ENCODE measurements at regions of chr14 and their contacts with region 1.

Region 1: GRCh38 chr14:32939254-32940065 is 781 bp downstream of the NPAS3 start:
- DNase-seq: peak; percentile 95
- H3K4me3 ChIP-seq: peak overlapping the region; percentile 54 to 88 (median 71)
- H3K27ac ChIP-seq: peak overlapping the region; percentile 90 to 98 (median 94)
- H3K4me1 ChIP-seq: peaks cover 0 to 28% (median 22%) of the 10 kb centered on the region in 4 donors
- H3K27me3 ChIP-seq: peaks cover 0 to 9% (median 0%) of the 10 kb centered on the region in 3 donors
- CTCF ChIP-seq: no peak
- EP300 ChIP-seq: no peak
- POLR2A ChIP-seq: peak; percentile 19 to 36

Region 2: DNA sequence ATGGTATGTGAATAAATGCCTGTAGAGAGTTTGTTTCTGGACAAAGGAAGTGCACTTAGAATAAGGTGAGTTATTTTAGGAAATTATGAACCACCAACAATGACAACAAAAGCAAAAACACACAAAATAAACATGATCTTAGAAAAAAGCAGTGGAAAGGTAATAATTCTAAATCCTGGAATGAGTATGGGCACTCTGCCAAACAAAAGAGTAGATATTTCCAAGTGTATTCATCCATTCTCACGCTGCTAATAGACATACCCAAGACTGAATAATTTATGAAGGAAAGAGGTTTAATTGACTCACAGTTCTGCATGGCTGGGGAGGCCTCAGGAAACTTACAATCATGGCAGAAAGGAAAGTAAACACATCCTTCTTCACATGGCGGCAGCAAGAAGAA is 270.1 kb before region 1 on chr14:
- intact Hi-C with region 1: no loop called
- DNase-seq: no peak
- H3K4me3 ChIP-seq: no peak overlapping the region
- H3K27ac ChIP-seq: no peak overlapping the region
- H3K4me1 ChIP-seq: no peaks in the 10 kb centered on the region
- H3K27me3 ChIP-seq: no peaks in the 10 kb centered on the region
- CTCF ChIP-seq: no peak
- EP300 ChIP-seq: no peak
- POLR2A ChIP-seq: no peak

Region 3: DNA sequence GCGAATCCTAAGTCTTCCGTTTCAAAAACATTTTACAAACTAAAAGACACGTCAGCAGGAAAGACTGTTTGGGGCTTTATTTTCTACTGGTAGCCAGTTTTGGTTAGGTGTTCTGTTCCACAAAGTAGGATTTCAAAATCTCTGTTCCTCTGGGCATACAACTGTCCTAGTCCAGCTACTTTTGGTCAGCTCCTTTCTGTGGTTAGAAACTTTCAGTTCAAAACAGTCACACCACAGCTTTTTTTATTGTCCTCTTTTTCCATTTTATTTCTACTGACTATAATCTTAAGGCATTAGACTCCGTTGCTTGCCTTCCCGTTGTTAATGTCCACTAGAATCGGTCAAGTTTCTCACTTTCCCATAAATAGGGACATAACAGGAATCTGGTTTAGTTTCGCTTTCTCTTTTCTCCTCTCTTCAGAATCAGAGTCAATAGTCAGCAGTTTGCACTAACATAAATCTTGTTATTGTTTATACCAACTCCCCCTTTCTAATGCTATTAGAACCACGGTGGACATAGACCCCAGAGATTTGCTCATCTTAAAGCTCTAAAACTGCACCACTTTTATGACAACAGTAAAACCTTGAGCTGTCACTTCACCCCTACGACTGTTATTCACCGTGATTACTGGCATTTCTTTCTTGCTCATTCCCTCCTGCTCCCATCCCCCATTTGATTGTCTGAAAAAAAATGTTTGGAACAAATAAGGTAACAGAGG is 42.3 kb before region 1 on chr14:
- intact Hi-C with region 1: loop called (anchors 2 kb)
- DNase-seq: no peak
- H3K4me3 ChIP-seq: peak overlapping the region; percentile 29 to 55 (median 54)
- H3K27ac ChIP-seq: peak overlapping the region; percentile 68 to 85 (median 82)
- H3K4me1 ChIP-seq: peaks cover 0 to 6% (median 3%) of the 10 kb centered on the region in 4 donors
- H3K27me3 ChIP-seq: no peaks in the 10 kb centered on the region
- CTCF ChIP-seq: no peak
- EP300 ChIP-seq: no peak
- POLR2A ChIP-seq: no peak

Region 4: DNA sequence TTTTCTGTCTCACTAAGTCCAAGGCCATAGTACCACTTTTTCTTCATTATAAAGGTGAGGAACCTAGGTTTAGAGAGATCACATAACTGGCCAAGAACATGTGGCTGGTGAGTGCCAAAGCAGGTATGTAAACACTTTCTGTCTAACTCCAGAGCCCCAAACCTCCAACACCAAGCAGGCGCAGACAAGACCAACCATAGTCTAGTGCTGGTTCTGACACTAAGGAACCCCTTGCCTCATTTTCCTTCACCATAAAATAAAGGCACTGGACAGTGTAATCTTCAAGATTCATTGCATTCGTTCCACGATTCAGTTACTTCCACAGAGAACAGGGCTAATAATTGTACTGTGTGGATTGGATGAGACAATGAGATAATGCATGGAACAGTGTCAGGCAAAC is 70.2 kb after region 1 on chr14:
- intact Hi-C with region 1: loop called (anchors 10 kb)
- DNase-seq: no peak
- H3K4me3 ChIP-seq: no peak overlapping the region
- H3K27ac ChIP-seq: no peak overlapping the region
- H3K4me1 ChIP-seq: peaks cover 0 to 13% (median 9%) of the 10 kb centered on the region in 4 donors
- H3K27me3 ChIP-seq: no peaks in the 10 kb centered on the region
- CTCF ChIP-seq: no peak
- EP300 ChIP-seq: no peak
- POLR2A ChIP-seq: no peak

Region 5: DNA sequence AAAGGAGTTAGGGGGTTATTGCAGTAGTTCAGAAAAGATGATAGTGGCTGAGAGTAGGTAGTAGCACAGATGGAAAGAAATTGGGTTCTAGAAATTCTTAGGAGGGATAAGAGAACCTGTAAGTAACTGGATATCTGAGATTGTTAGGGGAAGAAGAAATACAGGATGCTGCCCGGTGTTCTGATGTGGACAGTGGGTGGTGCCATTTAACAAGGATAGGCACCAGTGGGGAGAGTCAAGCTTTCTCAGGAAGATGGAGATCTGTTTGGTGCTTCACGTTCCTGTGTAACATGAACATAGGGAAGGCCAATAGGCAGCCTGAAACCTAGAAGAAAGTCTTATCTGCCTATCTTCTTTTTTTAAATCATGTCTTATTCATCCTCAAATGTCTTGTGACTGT is 245.1 kb after region 1 on chr14:
- intact Hi-C with region 1: no loop called
- DNase-seq: no peak
- H3K4me3 ChIP-seq: no peak overlapping the region
- H3K27ac ChIP-seq: no peak overlapping the region
- H3K4me1 ChIP-seq: no peaks in the 10 kb centered on the region
- H3K27me3 ChIP-seq: no peaks in the 10 kb centered on the region
- CTCF ChIP-seq: no peak
- EP300 ChIP-seq: no peak
- POLR2A ChIP-seq: no peak

Region 6: GRCh38 chr14:33792720-33793368 is 853.4 kb after region 1 on chr14:
- intact Hi-C with region 1: loop called (anchors 5 kb)
- DNase-seq: peak; percentile 90
- H3K4me3 ChIP-seq: peak overlapping the region in 3 of 4 donors; percentile 21 to 40 (median 36)
- H3K27ac ChIP-seq: peak overlapping the region in 3 of 4 donors; percentile 14 to 36 (median 32)
- H3K4me1 ChIP-seq: peaks cover 0 to 15% (median 1%) of the 10 kb centered on the region in 4 donors
- H3K27me3 ChIP-seq: no peaks in the 10 kb centered on the region
- CTCF ChIP-seq: peak; percentile 78 to 94 (median 83)
- EP300 ChIP-seq: no peak
- POLR2A ChIP-seq: no peak

Measured in sigmoid colon (tissue), 7 donors.